ENCODE measurements at regions of chr5 and their contacts with region 1.

Region 1: DNA sequence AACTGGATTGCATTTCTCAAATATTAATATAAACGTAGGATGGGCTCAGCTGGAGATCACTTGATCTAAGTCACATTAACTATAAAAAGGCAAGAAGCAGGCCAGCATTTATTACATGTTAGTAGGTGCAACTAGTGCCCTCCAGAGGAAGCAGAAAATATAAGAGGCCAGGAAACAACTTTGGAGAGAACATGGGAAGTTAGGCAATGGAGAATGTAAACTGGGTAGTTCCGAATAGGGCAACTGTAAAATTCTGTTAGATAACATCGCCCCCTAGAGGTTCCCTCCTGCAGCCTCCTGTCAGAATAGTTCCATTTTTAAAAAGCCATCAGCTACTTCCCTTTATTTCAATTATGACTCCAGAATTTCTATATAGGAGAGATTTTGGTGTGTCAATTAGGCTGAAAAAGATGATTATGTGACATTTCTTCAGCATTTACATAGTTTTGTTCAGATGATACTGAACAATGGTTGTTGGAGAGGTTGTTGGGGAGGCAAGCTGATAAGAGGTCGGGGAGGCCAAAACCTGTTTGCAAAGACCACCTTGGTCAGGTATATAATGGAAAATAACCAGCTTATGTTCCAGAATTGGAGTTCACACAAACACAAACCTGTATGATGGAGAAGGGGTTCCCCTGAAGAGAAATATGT is 22.4 kb downstream of the CCL28 start:
- DNase-seq: peak; percentile 61
- H3K4me3 Mint-ChIP-seq: no peak overlapping the region
- H3K27ac Mint-ChIP-seq: no peak overlapping the region
- H3K4me1 Mint-ChIP-seq: peaks cover 17% of the 10 kb centered on the region
- H3K27me3 Mint-ChIP-seq: no peaks in the 10 kb centered on the region

Region 2: DNA sequence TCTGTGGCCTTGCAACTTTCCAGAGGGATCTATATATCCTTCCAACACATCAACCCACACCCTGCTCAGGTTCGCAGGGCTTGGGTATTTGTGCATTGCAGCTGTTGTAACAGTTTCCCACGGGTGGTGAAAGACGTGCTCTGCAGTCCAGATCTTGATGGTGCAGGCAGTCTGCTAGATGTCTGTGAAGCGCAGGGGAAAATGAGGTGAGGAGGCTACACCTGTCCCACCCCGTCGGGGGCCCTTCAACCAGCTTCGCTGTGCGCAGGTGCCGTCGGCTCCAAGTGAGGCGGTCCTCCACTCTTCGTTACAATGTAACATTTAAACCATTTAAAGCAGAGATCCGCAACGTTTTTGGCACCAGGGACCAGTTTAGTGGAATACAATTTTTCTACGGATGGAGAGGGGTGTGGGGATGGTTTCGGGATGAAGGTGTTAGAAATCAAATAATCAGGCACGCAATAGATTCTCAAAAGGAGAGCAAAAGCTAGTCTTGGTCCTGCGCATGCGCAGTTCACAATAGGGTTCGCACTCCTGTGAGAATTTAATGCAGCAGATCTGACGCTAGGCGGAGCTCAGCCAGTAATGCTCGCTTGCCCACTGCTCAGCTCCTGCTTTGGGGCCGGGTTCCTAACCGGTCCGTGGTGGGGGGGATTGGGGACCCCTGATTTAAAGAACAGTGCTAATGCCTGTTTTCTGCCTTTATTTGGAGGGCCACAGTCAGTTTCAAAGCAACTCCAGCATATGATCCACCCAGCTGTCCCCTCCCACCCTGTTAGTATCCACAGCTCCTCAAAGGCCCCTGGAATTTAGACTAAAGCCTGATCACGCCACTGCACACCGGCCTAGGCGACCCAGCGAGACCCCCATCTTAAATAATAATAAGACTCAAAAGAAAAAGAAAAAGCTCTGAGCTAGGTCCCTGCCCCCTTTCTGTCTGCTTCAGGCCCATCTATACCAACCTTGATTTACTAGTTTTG is 481.0 kb before region 1 on chr5:
- CTCF ChIA-PET with region 1: interaction called, 11 read pairs
- DNase-seq: peak; percentile 94
- H3K4me3 Mint-ChIP-seq: peak overlapping the region; percentile 81
- H3K27ac Mint-ChIP-seq: peak overlapping the region; percentile 46
- H3K4me1 Mint-ChIP-seq: peaks cover 21% of the 10 kb centered on the region
- H3K27me3 Mint-ChIP-seq: peaks cover 45% of the 10 kb centered on the region

Region 3: GRCh38 chr5:43105369-43106289 is 284.2 kb before region 1 on chr5:
- CTCF ChIA-PET with region 1: interaction called, 20 read pairs
- DNase-seq: peak; percentile 92
- H3K4me3 Mint-ChIP-seq: peak overlapping the region; percentile 62
- H3K27ac Mint-ChIP-seq: peak overlapping the region; percentile 80
- H3K4me1 Mint-ChIP-seq: peaks cover 45% of the 10 kb centered on the region
- H3K27me3 Mint-ChIP-seq: no peaks in the 10 kb centered on the region

Region 4: DNA sequence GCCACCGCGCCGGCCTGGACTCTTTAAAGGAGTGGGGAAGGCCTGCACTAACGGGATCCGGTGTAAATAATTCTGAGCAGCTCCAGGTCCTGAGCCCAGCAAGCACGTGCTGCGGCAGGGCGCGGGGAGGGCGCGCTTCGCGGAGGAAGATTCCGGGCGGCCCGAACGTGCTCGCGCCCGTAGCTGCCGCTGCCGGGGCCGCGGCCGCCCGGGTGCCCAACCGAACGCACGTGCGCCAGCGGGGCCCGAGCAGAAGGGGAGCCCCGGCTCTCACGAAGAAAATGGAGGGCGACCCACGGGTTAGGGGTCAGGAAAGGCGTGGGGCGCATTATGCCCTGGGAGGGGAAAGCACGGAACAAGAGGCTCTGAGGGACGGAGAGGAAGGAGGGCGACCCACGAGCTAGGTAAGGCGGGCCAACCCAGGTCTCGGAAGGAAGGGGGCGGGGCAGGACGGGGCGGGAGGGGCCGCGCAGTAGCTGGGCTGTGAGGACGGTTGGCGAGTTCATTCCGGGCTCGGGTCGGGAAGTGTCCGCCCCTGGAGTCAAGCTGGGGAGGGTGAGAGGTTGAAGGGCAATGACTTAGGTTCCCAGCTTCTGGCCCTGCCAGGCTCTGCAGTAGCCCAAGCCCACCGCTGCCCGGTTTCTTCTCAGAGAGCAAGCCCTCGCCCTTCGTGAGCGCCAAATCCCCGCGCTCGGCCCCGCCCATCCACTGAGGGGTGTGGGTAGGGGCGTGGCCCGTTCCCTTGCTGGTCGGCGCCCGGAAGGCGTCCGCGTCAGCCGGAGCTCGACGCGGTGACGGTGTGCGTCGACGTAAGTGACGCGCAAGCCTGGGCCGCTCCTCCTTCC is 268.9 kb before region 1 on chr5 and contains the start of gene ZNF131:
- CTCF ChIA-PET with region 1: interaction called, 10 read pairs
- DNase-seq: peak; percentile 97
- H3K4me3 Mint-ChIP-seq: peak within 1 kb of the TSS; percentile 90
- H3K27ac Mint-ChIP-seq: peak within 1 kb of the TSS; percentile 96
- H3K4me1 Mint-ChIP-seq: peaks cover 38% of the 10 kb centered on the region
- H3K27me3 Mint-ChIP-seq: peaks cover 5% of the 10 kb centered on the region

Region 5: GRCh38 chr5:43305948-43306565 is 83.7 kb before region 1 on chr5:
- CTCF ChIA-PET with region 1: interaction called, 11 read pairs
- DNase-seq: no peak
- H3K4me3 Mint-ChIP-seq: no peak overlapping the region
- H3K27ac Mint-ChIP-seq: peak overlapping the region; percentile 50
- H3K4me1 Mint-ChIP-seq: peaks cover 77% of the 10 kb centered on the region
- H3K27me3 Mint-ChIP-seq: no peaks in the 10 kb centered on the region

Region 6: GRCh38 chr5:43422143-43422542 is 32.3 kb after region 1 on chr5:
- CTCF ChIA-PET with region 1: no interaction called
- DNase-seq: no peak
- H3K4me3 Mint-ChIP-seq: no peak overlapping the region
- H3K27ac Mint-ChIP-seq: no peak overlapping the region
- H3K4me1 Mint-ChIP-seq: no peaks in the 10 kb centered on the region
- H3K27me3 Mint-ChIP-seq: peaks cover 5% of the 10 kb centered on the region

Region 7: DNA sequence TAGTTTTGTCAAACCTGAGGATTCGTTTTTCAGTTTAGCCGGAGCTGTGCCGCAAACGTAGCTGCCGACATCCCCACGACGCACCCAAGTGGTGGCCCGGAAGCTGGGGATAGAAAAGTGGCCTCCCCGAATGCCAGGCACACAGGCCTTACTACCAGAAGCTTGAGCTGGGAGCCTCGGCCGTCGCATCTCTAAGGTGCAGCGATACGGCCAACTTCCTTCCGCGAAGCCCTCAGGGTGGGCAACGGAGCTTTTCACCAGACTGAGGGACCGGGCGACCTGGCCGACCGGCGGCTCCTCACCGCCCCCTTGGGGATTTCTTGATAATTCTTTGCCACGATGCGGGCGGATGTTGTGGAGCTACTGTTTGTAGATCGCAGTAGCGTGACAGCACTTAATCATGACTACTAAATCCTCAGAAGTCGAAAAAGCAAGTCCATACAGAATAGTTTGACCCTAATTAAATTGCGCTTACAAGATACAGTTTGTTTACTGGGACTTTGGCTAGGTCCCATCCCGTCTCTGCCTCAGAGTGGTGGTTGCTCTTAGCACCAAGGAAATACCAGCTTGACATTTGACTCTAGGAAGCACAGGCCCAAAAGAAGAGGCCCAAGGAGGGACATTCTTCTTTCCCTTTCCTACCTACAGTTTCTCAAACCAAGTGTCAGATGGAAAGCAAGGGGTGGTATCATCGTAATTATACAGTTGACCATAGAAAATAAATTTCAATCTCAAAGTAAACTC is 94.5 kb after region 1 on chr5:
- CTCF ChIA-PET with region 1: interaction called, 19 read pairs
- DNase-seq: peak; percentile 91
- H3K4me3 Mint-ChIP-seq: peak overlapping the region; percentile 92
- H3K27ac Mint-ChIP-seq: peak overlapping the region; percentile 99
- H3K4me1 Mint-ChIP-seq: peaks cover 46% of the 10 kb centered on the region
- H3K27me3 Mint-ChIP-seq: peaks cover 3% of the 10 kb centered on the region

Measured in activated naive CD4-positive, alpha-beta T cell treated with anti-CD3 and anti-CD28 coated beads, Interleukin-2, amount 10 ng/mL, durations not matched to agents 7 days and 5 days (primary cell).